ENCODE measurements at regions of chrX and their contacts with region 1.

Region 1: GRCh38 chrX:112947981-112948615 is 107.5 kb upstream of the AMOT start:
- DNase-seq: no peak
- H3K4me3 ChIP-seq: no peak overlapping the region
- H3K27ac ChIP-seq: no peak overlapping the region
- H3K4me1 ChIP-seq: no peaks in the 10 kb centered on the region
- H3K27me3 ChIP-seq: peaks cover 0 to 50% of the 10 kb centered on the region in 2 donors
- CTCF ChIP-seq: no peak
- POLR2A ChIP-seq: no peak

Region 2: DNA sequence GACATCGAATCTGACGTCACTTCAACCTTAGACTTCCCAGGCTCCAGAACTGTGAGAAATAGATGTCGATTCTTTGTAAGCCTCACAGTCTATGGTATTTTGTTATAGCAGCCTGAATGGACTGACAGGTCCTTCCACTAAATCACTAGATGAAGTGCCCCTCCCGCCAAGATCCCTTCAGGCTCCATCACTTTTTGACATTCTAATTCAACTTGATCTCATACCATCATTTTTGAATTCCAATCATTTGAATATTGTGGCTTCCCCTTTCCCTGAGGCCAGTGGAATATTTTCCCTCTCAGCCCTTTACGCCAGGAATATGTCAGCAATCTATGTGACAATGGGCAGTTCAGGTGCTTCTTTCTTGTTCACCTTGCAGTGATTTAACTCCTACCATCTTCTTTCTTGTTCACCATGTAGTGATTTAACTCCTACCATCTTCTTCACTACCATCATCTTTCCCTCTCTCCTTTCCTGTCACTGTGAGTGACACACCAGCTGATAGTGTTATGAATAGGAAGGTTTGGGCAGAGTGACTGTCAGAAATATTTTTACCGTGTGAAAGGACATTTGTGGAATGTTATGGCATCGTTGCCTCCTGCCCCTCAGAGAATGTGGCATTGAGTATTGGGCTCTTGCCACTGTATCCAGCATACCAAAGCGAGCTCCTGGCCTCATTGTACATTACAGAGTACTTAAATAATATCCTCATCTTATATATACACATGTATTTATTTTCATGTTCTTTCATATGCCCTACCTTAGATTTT is 16.8 kb before region 1 on chrX:
- intact Hi-C with region 1: loop called (anchors 2 kb)
- DNase-seq: no peak
- H3K4me3 ChIP-seq: no peak overlapping the region
- H3K27ac ChIP-seq: no peak overlapping the region
- H3K4me1 ChIP-seq: no peaks in the 10 kb centered on the region
- H3K27me3 ChIP-seq: peaks cover 0 to 27% of the 10 kb centered on the region in 2 donors
- CTCF ChIP-seq: no peak
- POLR2A ChIP-seq: no peak

Measured in breast epithelium (tissue), 4 donors.